Gastrocnemius medialis (tissue), 4 donors: ENCODE measurements at regions of chr22 and their contacts with region 1.

Region 1: DNA sequence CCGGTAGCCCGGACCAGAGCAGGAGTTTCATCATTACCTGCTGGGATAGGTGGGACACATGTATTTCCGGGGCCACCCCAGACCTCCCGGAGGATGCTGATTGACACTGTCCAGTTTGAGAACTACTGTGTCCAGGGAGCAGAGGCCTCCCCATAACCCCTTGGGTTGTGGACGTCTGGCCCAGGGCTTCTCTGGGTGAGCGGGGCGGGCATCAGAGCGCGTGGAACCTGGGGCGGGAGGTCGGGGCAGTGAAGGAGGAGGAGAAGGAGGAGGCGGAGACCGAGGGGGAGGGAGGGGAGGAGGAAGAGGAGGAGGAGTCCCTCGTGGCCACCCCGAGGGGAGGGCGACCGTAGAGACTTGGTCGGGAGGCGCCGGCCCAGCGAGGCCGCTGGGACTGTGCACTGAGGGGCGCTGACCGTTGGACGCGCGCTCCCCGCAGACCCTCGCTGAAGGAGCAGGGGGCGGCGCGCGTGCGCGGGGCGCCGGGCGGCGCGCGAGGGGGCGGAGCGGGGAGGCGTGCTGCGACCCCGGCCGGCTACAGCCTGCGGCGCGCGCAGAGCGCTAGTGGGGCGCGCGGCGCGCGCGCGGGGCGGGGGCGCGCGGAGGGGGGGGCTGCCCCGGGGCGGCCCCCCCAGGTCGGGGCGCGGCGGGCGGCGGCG is at the start of gene GRK3:
- DNase-seq: peak; percentile 30 to 45
- ATAC-seq: peak; percentile 34 to 37
- H3K4me3 ChIP-seq: peak within 1 kb of the TSS; percentile 58 to 64 (median 62)
- H3K27ac ChIP-seq: peak within 1 kb of the TSS; percentile 15 to 53 (median 36)
- H3K4me1 ChIP-seq: peaks cover 7 to 13% of the 10 kb centered on the region in 2 donors
- H3K27me3 ChIP-seq: peaks cover 19 to 36% (median 22%) of the 10 kb centered on the region in 3 donors
- CTCF ChIP-seq: no peak
- POLR2A ChIP-seq: peak in 1 of 2 donors; percentile 17
- total RNA-seq, gene GRK3: 0.49 to 1.1 (median 0.81) TPM

Region 2: GRCh38 chr22:25475257-25476022 is 89.0 kb before region 1 on chr22:
- in situ Hi-C with region 1: no loop called
- intact Hi-C with region 1: no loop called
- DNase-seq: no peak
- ATAC-seq: no peak
- H3K4me3 ChIP-seq: no peak overlapping the region
- H3K27ac ChIP-seq: no peak overlapping the region
- H3K4me1 ChIP-seq: peaks cover 0 to 6% of the 10 kb centered on the region in 2 donors
- H3K27me3 ChIP-seq: no peaks in the 10 kb centered on the region
- CTCF ChIP-seq: no peak
- POLR2A ChIP-seq: no peak

Region 3: GRCh38 chr22:25666308-25666707 is 101.9 kb after region 1 on chr22:
- in situ Hi-C with region 1: loop called in 1 of 4 experiments (anchors 25 kb)
- intact Hi-C with region 1: no loop called
- DNase-seq: peak; percentile 5 to 23
- ATAC-seq: peak; percentile 23 to 24
- H3K4me3 ChIP-seq: no peak overlapping the region
- H3K27ac ChIP-seq: no peak overlapping the region
- H3K4me1 ChIP-seq: peaks cover 0 to 6% of the 10 kb centered on the region in 2 donors
- H3K27me3 ChIP-seq: no peaks in the 10 kb centered on the region
- CTCF ChIP-seq: no peak
- POLR2A ChIP-seq: no peak

Region 4: DNA sequence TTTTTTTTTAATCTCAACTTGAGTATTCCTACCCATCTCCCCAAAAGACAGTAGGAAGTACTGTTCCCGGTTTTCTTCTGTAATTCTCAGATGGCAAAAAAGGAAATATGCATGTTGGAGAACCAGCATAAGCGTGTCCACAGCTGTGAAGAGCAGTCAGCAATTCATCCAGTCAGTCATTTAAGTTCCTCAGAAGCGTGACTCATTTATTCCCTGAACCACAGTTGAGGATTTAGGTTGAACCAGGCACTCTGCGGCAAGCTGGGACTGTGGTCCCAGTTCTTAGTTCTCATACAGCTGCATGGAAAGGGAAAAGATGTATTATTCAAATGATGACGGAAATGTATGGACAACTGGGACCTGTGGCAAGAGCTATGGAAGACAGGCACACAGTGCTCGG is 116.5 kb after region 1 on chr22:
- in situ Hi-C with region 1: no loop called
- intact Hi-C with region 1: loop called (anchors 10 kb)
- DNase-seq: no peak
- ATAC-seq: no peak
- H3K4me3 ChIP-seq: no peak overlapping the region
- H3K27ac ChIP-seq: no peak overlapping the region
- H3K4me1 ChIP-seq: no peaks in the 10 kb centered on the region
- H3K27me3 ChIP-seq: no peaks in the 10 kb centered on the region
- CTCF ChIP-seq: no peak
- POLR2A ChIP-seq: no peak